Ovary (tissue), 10 donors: ENCODE measurements at regions of chr9 and their contacts with region 1.

Region 1: GRCh38 chr9:13588151-13589033 is 308.9 kb upstream of the MPDZ start:
- DNase-seq: no peak
- H3K4me3 ChIP-seq: no peak overlapping the region
- H3K27ac ChIP-seq: no peak overlapping the region
- H3K4me1 ChIP-seq: peaks cover 4% of the 10 kb centered on the region
- H3K27me3 ChIP-seq: no peaks in the 10 kb centered on the region
- CTCF ChIP-seq: no peak
- EP300 ChIP-seq: no peak
- POLR2A ChIP-seq: no peak

Region 2: DNA sequence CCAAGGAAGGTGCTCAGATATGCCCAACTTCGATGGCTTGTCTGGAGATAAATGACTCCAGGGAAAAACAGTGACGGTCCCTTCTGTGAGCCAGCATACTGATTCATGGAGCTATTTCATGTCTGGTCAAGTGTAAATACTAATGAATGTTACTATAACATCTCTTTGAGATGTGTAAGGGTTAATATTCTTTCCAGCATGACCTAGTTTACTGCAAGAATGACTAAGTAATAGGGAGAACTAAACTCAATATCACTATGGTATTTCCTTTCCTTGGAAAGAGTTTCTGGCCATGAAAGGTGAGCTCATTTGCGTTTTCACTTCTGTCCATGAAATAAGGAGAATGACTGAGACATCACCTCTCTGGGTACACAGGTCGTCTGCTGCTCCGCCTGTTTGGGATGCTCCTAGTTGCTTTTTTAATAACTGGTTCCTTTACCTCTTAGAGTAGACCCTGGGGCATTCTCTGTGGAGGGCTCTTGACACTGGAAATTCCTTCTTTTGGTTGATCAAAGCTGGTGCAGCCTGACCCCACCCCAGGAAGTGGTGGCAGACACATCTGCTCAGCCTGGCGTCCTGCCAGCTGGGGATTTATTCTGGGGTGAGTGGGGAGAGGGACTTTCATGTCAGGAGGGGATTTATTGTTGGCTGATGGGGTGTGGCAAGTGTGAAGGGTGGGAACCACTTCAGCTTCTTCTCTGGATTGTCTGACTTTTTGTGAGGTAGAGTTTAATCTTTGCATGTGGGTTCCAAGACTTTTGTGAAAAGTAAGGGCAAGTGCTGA is 58.9 kb before region 1 on chr9:
- intact Hi-C with region 1: loop called in 1 of 4 experiments (anchors 10 kb)
- DNase-seq: no peak
- H3K4me3 ChIP-seq: no peak overlapping the region
- H3K27ac ChIP-seq: no peak overlapping the region
- H3K4me1 ChIP-seq: no peaks in the 10 kb centered on the region
- H3K27me3 ChIP-seq: no peaks in the 10 kb centered on the region
- CTCF ChIP-seq: no peak
- EP300 ChIP-seq: no peak
- POLR2A ChIP-seq: no peak

Region 3: DNA sequence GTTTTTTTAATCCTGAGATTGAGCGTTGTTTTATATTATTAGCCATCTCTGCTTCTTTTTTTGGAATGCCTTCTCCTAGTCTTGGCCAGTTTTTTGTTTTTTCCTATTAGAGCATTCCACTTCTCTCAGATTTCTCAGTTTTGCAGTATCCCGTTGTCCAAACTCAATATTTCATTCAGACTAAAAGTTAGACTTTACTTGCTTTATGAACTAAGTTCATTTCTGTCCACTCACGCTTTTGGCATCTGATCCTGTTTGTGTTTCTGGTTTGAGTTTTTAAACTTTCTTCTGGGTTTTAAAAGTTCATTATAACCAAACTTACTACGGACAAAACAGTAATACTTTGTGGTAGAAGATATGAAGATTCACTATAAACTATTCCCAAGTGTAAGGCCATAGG is 20.6 kb before region 1 on chr9:
- intact Hi-C with region 1: loop called in 1 of 4 experiments (anchors 2 kb)
- DNase-seq: no peak
- H3K4me3 ChIP-seq: no peak overlapping the region
- H3K27ac ChIP-seq: no peak overlapping the region
- H3K4me1 ChIP-seq: peaks cover 7% of the 10 kb centered on the region
- H3K27me3 ChIP-seq: no peaks in the 10 kb centered on the region
- CTCF ChIP-seq: no peak
- EP300 ChIP-seq: no peak
- POLR2A ChIP-seq: no peak

Region 4: GRCh38 chr9:13744261-13744901 is 156.0 kb after region 1 on chr9:
- intact Hi-C with region 1: no loop called
- DNase-seq: no peak
- H3K4me3 ChIP-seq: no peak overlapping the region
- H3K27ac ChIP-seq: no peak overlapping the region
- H3K4me1 ChIP-seq: no peaks in the 10 kb centered on the region
- H3K27me3 ChIP-seq: peaks cover 2% of the 10 kb centered on the region
- CTCF ChIP-seq: no peak
- EP300 ChIP-seq: no peak
- POLR2A ChIP-seq: no peak